GM13976 (cell line): ENCODE measurements at regions of chr17 and their contacts with region 1.

Region 1: DNA sequence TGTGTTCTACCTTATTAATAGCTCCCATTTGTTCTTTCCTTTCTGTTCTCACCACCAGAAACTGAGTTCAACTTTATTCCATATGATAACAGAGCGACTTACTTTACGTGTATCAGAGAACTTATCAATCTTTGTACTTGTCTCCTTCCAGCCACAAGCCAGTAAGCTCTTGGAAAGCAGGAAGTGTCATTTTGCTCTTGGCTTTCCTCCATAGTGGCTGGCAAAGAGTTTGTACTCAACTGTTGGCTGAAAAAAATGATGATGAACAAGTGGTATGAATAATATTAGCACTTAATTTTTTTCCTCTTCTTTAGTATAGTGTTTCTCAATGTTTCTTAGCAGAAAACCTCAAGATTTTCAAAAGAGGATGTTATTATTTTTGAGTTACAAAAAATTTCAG is 182.4 kb upstream of the TOM1L1 start:
- DNase-seq: no peak
- CTCF ChIP-seq: no peak

Region 2: GRCh38 chr17:54486922-54487321 is 231.4 kb before region 1 on chr17:
- in situ Hi-C with region 1: no loop called
- DNase-seq: no peak
- CTCF ChIP-seq: no peak

Region 3: DNA sequence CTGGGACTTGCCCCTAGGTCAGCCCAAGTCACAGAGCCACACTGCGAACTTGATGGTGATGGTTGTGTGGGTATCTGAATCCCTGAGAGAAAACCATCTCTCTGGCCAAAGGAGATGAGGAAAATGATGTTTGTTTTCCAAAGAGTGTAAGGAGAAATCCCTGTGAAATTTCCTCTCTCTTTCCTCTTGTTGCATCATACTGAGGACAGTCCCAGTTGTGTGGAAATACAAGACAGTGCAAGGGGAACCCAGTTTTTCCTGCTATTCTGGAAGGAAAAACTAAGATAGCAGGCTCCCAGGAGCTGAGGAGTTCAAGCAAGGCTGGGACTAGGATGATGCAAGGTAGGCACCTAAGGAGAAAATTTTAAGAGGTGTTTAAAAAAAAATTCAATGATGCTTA is 95.6 kb after region 1 on chr17:
- in situ Hi-C with region 1: loop called (anchors 25 kb)
- DNase-seq: no peak
- CTCF ChIP-seq: no peak

Region 4: GRCh38 chr17:54932711-54933110 is 214.4 kb after region 1 on chr17:
- in situ Hi-C with region 1: no loop called
- DNase-seq: no peak
- CTCF ChIP-seq: no peak